Activated CD4-positive, alpha-beta T cell treated with anti-CD3 and anti-CD28 coated beads, Interleukin-2, amount 10 ng/mL, durations not matched to agents 7 days and 5 days (primary cell): ENCODE measurements at regions of chr4 and their contacts with region 1.

Region 1: DNA sequence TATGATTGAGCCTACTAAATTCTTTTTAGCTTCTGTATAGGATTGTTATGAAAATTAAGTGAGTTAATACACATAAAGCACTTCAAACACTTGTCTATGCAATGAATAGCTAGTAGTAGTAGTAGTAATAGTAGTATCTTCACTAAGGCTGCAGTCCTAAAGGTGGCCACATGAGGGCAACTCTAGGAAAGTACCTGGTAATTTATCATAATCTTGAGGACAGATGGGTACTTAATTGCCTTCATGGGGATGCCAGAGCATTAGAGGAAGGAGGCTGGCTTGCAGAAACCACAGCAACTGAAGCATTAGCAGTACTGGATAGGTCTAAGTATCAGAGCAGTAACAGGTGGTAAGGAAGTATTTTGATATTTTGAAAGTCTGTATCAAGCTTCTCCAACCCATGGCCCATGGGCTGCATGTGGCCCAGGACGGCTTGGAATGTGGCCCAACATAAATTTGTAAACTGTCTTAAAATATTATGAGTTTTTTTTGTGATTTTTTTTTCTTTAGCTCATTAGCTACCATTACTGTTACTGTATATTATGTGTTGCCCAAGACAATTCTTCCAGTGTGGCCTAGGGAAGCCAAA is 17.3 kb downstream of the NIPAL1 start:
- DNase-seq: peak; percentile 67
- H3K4me3 Mint-ChIP-seq: no peak overlapping the region
- H3K27ac Mint-ChIP-seq: no peak overlapping the region
- H3K4me1 Mint-ChIP-seq: peaks cover 10% of the 10 kb centered on the region
- H3K27me3 Mint-ChIP-seq: peaks cover 7% of the 10 kb centered on the region

Region 2: GRCh38 chr4:47891928-47892327 is 142.0 kb before region 1 on chr4:
- CTCF ChIA-PET with region 1: no interaction called
- POLR2A ChIA-PET with region 1: no interaction called
- DNase-seq: no peak
- H3K4me3 Mint-ChIP-seq: no peak overlapping the region
- H3K27ac Mint-ChIP-seq: no peak overlapping the region
- H3K4me1 Mint-ChIP-seq: peaks cover 6% of the 10 kb centered on the region
- H3K27me3 Mint-ChIP-seq: no peaks in the 10 kb centered on the region

Region 3: DNA sequence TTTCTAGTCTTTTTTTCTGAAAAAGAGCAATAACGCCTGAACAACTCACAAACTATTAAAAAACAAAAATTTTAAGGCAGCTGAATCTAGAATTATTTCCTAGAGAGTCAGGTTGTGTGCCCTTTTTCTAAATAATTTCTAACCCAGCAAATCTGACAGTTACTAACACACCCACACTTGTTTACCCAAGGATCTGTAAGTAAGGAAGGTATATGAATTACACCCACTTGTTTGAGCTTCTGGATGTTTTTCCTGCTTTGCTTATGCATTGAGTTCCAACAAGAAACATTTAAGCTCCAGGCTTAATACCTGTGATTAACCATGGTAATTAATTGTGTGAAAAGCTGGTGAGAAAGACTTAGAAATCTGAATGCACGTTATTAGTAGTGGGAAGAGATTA is 15.8 kb before region 1 on chr4:
- CTCF ChIA-PET with region 1: interaction called, 12 read pairs
- POLR2A ChIA-PET with region 1: no interaction called
- DNase-seq: no peak
- H3K4me3 Mint-ChIP-seq: no peak overlapping the region
- H3K27ac Mint-ChIP-seq: no peak overlapping the region
- H3K4me1 Mint-ChIP-seq: peaks cover 21% of the 10 kb centered on the region
- H3K27me3 Mint-ChIP-seq: peaks cover 36% of the 10 kb centered on the region

Region 4: GRCh38 chr4:48047421-48047844 is 13.5 kb after region 1 on chr4:
- CTCF ChIA-PET with region 1: interaction called, 16 read pairs
- POLR2A ChIA-PET with region 1: no interaction called
- DNase-seq: peak; percentile 81
- H3K4me3 Mint-ChIP-seq: peak overlapping the region; percentile 1
- H3K27ac Mint-ChIP-seq: peak overlapping the region; percentile 25
- H3K4me1 Mint-ChIP-seq: peaks cover 40% of the 10 kb centered on the region
- H3K27me3 Mint-ChIP-seq: peaks cover 56% of the 10 kb centered on the region